Activated naive CD8-positive, alpha-beta T cell treated with anti-CD3 and anti-CD28 coated beads, Interleukin-2, amount 10 ng/mL, durations not matched to agents 7 days and 5 days (primary cell): ENCODE measurements at regions of chr1 and their contacts with region 1.

Region 1: DNA sequence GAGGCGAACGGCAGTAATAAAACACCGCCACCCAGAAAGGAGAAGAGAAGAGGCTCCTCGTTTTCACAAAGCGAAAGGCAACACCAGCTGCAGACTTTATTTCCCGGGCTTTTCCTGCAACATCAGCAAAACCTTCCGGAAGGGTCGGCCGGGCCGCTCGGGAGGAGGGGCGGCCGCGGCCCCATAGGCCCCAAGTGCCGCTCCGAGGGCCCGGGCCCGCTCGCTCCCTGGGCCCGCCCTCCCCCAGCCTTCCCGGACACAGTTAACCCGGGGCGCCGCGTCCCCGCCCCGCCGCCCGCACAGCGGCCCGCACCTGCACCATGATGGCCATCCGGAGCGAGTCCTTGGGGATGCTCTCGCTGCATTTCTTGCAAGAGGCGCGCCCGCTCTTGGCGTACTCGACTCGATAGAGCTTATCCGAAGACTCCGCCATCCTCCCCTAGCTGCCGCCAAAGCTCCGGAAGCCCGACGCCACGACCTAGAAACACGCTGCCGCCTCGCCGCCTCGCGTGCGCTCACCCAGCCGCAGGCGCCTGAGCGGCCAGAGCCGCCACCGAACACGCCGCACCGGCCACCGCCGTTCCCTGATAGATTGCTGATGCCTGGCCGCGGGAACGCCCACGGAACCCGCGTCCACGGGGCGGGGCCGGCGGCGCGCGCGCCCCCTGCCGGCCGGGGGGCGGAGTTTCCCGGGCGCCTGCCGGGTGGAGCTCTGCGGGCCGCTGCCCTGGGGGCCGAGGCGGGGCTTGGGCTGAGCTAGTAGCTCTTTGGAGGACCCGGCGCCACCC is at the start of gene PARP1:
- DNase-seq: peak; percentile 97
- ATAC-seq: peak; percentile 89
- H3K4me3 Mint-ChIP-seq: peak within 1 kb of the TSS; percentile 92
- H3K27ac Mint-ChIP-seq: peak within 1 kb of the TSS; percentile 92
- H3K4me1 Mint-ChIP-seq: peaks cover 27% of the 10 kb centered on the region
- H3K27me3 Mint-ChIP-seq: peaks cover 2% of the 10 kb centered on the region
- total RNA-seq, gene PARP1: 128 to 132 TPM

Region 2: GRCh38 chr1:226308723-226309315 is 98.9 kb before region 1 on chr1 and contains the start of gene LIN9:
- POLR2A ChIA-PET with region 1: interaction called, 25 read pairs
- DNase-seq: peak; percentile 96
- ATAC-seq: peak; percentile 87
- H3K4me3 Mint-ChIP-seq: peak within 1 kb of the TSS; percentile 90
- H3K27ac Mint-ChIP-seq: peak within 1 kb of the TSS; percentile 92
- H3K4me1 Mint-ChIP-seq: peaks cover 21% of the 10 kb centered on the region
- H3K27me3 Mint-ChIP-seq: peaks cover 18% of the 10 kb centered on the region
- total RNA-seq, gene LIN9: 11.0 to 11.1 TPM

Region 3: DNA sequence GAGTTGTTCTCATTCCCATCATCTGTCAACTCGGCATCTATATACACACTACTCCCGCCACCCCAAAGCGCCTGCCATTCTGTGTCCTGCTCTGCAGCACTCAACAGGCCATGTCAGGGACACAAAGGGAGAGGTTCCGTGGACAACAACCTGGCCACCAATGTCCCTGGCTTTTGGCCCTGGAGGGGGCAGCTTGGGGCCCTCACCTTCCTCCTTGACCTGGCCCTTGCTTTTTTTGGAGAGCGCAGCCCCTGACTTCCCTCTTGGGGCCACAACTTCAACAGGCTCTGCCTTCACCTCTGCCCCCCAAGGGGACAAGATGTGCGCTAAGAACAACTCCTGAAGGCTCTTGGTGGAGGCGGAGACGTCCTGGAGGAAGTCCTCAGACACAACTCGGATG is 28.0 kb before region 1 on chr1:
- POLR2A ChIA-PET with region 1: no interaction called
- DNase-seq: no peak
- ATAC-seq: no peak
- H3K4me3 Mint-ChIP-seq: no peak overlapping the region
- H3K27ac Mint-ChIP-seq: no peak overlapping the region
- H3K4me1 Mint-ChIP-seq: peaks cover 4% of the 10 kb centered on the region
- H3K27me3 Mint-ChIP-seq: no peaks in the 10 kb centered on the region

Region 4: GRCh38 chr1:226424228-226425003 is 16.7 kb after region 1 on chr1:
- POLR2A ChIA-PET with region 1: interaction called, 15 read pairs
- DNase-seq: no peak
- ATAC-seq: peak; percentile 74
- H3K4me3 Mint-ChIP-seq: no peak overlapping the region
- H3K27ac Mint-ChIP-seq: no peak overlapping the region
- H3K4me1 Mint-ChIP-seq: peaks cover 22% of the 10 kb centered on the region
- H3K27me3 Mint-ChIP-seq: peaks cover 32% of the 10 kb centered on the region

Region 5: GRCh38 chr1:226444901-226445300 is 37.2 kb after region 1 on chr1:
- POLR2A ChIA-PET with region 1: interaction called, 12 read pairs
- DNase-seq: peak; percentile 74
- ATAC-seq: peak; percentile 99
- H3K4me3 Mint-ChIP-seq: peak overlapping the region; percentile 54
- H3K27ac Mint-ChIP-seq: peak overlapping the region; percentile 72
- H3K4me1 Mint-ChIP-seq: peaks cover 28% of the 10 kb centered on the region
- H3K27me3 Mint-ChIP-seq: peaks cover 69% of the 10 kb centered on the region